Mammary epithelial cell (primary cell): ENCODE measurements at regions of chr9 and their contacts with region 1.

Region 1: DNA sequence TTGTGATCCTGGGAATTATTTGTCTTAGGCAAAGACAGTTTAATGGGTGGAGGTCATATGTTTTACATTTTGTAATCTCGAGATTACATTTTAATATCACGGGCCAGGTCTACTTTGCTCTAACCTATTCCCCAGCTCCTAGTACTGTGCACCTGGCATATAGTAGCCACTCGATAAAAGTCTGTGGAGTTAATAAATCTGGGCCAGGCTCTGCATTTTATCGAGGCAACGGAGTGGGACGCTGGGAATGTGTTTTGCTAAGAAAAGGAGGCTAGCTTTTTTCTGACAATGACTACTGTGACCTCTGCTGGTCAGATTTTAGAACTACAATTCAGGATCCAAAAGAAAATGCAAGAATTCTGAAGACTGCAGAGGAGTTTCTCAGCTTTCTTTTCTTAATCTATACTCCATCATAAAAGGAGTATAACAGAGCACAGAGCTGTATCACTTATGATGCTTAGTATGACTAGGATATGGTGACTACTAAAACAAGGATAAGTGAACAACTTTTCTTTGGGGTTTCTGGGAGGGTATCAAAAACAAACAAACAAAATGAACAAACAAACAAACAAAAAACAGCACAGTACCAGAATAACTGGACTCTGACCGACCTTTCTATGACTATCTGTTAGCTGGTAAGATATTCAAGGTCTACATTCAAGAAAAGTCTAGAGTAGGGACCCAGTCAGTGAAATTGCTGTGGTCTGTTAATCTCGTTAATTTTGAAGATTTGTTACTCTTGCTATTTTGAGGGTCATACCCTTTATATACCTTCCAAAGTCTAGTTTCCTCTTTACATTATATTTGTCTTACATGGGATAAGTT is 46.1 kb upstream of the CER1 start:
- DNase-seq: peak; percentile 36
- H3K4me3 ChIP-seq: no peak overlapping the region
- H3K27ac ChIP-seq: no peak overlapping the region
- H3K4me1 ChIP-seq: no peaks in the 10 kb centered on the region
- H3K27me3 ChIP-seq: no peaks in the 10 kb centered on the region
- CTCF ChIP-seq: peak; percentile 56 to 72

Region 2: DNA sequence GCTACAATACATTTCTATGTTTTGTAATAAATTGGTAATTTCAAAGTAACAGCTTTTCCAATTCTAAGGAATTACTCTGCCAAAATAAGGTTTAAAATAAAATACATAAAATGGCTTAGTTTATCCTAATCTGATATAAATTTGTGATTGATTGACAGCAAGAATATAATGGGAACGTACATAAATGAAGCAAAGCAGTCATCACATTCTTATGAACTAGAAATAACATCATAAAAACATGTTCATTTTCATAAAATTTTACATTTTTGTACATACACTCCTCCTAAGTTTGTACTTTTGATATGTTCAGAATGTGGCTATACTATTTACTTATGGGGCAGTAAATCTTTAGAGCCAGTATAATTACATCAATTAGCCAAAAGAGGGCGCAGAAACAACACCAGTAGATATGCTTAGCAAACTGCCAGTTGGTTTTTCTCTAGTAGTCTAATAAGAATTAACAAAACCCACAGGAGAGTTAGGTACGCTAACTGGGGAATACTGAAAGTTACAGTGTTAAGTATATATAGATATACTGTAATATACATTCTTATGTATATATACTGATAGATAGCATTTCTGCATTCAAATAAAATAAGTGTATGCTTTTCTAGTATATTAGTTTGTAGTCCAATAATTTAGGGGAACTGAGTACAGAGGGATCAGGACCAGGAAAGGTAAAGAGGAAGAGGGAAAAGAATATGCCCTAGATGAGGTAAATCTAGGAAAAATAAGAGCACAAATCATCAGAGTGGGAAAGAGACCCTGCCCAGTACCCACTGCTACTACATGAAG is 152.2 kb before region 1 on chr9:
- CTCF ChIA-PET with region 1: no interaction called
- dilution Hi-C with region 1: no loop called
- in situ Hi-C with region 1: loop called (anchors 5 to 10 kb)
- intact Hi-C with region 1: loop called (anchors 1 kb)
- DNase-seq: peak; percentile 34
- H3K4me3 ChIP-seq: no peak overlapping the region
- H3K27ac ChIP-seq: no peak overlapping the region
- H3K4me1 ChIP-seq: no peaks in the 10 kb centered on the region
- H3K27me3 ChIP-seq: no peaks in the 10 kb centered on the region
- CTCF ChIP-seq: peak; percentile 62 to 72

Region 3: DNA sequence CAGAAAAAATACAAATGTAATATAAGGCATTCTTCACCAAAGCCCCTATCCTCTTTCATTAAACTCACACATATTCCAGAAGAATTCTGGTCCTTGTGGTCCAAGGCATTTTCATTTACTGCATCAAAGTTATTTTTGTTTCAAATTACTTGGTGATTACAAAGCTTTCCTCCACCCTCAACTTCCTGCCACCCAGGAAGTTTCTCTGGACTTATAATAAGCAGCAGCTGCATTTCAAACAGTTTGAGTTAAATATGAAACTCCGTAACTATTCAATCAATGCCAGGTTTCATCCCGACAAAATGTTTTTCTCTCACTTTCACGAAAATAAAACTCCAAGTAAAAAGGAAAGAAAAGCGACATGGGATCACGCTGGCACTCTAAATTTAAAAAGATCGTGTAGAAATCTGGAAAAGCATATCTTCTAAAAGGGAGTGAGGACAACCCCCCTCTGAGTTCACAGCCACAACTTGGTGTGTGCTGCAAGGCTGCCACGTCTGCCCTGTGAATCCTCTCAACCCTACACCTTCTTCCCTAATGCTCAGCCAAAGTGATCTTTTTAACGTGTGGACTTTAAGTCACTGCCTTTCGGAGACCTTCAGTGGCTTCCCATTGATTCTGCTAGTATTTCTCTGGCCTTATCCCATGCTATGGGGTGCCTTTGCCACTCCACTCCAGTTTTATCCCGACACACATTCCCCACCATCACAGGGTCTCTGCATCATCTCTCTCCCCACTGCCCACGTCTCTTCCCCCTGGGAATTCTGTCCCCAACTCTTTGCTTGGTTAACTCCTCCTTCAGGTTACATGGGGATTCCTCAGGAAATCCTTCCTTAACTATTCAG is 44.9 kb after region 1 on chr9:
- CTCF ChIA-PET with region 1: no interaction called
- dilution Hi-C with region 1: no loop called
- in situ Hi-C with region 1: no loop called
- intact Hi-C with region 1: no loop called
- DNase-seq: no peak
- H3K4me3 ChIP-seq: no peak overlapping the region
- H3K27ac ChIP-seq: no peak overlapping the region
- H3K4me1 ChIP-seq: no peaks in the 10 kb centered on the region
- H3K27me3 ChIP-seq: no peaks in the 10 kb centered on the region
- CTCF ChIP-seq: no peak

Region 4: GRCh38 chr9:14846871-14847311 is 78.3 kb after region 1 on chr9:
- CTCF ChIA-PET with region 1: no interaction called
- dilution Hi-C with region 1: no loop called
- in situ Hi-C with region 1: no loop called
- intact Hi-C with region 1: loop called (anchors 2 kb)
- DNase-seq: peak; percentile 23
- H3K4me3 ChIP-seq: no peak overlapping the region
- H3K27ac ChIP-seq: no peak overlapping the region
- H3K4me1 ChIP-seq: no peaks in the 10 kb centered on the region
- H3K27me3 ChIP-seq: peaks cover 2% of the 10 kb centered on the region
- CTCF ChIP-seq: peak; percentile 79 to 89